GM12878 (cell line): ENCODE measurements at regions of chr1 and their contacts with region 1.

Region 1: DNA sequence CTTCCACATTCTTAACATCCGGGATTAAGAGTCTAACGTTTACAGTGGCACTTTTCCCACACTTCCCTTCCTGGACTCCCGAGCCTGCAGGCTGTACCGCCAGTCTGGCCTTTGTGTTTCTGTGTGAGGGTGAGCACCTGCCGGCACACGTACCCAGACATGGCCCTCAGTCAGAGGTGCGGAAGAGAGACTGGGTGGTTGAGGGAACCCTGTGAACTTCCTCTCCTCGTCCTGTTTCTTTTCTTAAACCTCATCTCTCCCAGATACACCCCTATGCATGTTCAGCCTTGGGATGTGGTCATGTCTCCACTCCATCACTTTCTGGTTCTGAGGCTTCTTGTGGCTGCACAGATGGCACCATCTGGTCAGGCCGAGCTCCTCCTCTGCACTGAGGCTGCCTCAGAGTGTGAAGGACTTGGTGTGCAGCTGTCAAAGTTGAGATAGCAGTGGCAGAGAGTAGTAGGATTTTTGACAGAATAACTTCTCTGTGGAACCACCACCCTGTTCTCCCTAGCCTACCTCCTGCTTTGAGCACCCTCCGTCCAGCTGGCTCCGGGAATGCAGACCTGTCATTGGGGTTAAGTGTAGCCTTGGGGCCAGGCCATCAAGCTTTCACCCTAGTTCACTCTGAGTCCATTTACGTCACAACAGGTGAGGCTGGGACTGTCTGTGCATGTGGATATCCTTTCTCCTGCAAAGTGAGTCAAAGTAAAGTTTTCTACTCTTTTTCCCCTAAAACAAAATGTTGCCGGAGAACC is 31.4 kb downstream of the VASH2 start:
- DNase-seq: peak; percentile 93
- ATAC-seq: peak; percentile 47
- H3K4me3 ChIP-seq: no peak overlapping the region
- H3K27ac ChIP-seq: peak overlapping the region; percentile 93
- H3K4me1 ChIP-seq: peaks cover 56% of the 10 kb centered on the region
- H3K27me3 ChIP-seq: no peaks in the 10 kb centered on the region
- CTCF ChIP-seq: no peak
- EP300 ChIP-seq: no peak; a peak in 1 of 4 replicates
- POLR2A ChIP-seq: peak; percentile 65
- RAD21 ChIP-seq: no peak

Region 2: DNA sequence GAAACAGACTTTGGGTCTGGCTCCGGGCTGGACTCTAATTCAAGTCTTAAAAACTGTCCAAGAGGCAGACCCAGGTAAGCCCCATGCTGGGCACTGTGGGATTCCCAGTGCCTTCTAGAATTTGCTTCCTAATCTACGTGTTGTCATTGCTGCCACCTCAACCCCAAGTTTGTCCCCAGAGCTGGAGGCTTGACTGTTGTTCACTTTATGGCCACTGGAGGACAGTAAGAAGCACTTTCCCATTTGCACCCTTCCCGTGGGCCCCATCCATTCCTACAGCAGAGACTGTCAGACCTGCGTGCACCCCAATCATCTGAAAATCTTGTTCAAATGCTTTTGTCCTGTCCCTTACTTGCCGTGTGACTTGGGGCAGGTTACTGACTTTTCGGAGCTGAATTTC is 60.9 kb before region 1 on chr1:
- CTCF ChIA-PET with region 1: interaction called, 19 read pairs
- POLR2A ChIA-PET with region 1: interaction called, 3 read pairs
- RAD21 ChIA-PET with region 1: interaction called, 5 read pairs
- SMC1A ChIA-PET with region 1: interaction called, 30 read pairs
- in situ Hi-C with region 1: no loop called
- intact Hi-C with region 1: no loop called
- DNase-seq: no peak
- ATAC-seq: peak; percentile 51
- H3K4me3 ChIP-seq: no peak overlapping the region
- H3K27ac ChIP-seq: no peak overlapping the region
- H3K4me1 ChIP-seq: peaks cover 20% of the 10 kb centered on the region
- H3K27me3 ChIP-seq: no peaks in the 10 kb centered on the region
- CTCF ChIP-seq: peak; percentile 45 to 67 (median 57); a peak in 5 of 6 replicates
- EP300 ChIP-seq: no peak
- POLR2A ChIP-seq: no peak
- RAD21 ChIP-seq: peak; percentile 71

Region 3: DNA sequence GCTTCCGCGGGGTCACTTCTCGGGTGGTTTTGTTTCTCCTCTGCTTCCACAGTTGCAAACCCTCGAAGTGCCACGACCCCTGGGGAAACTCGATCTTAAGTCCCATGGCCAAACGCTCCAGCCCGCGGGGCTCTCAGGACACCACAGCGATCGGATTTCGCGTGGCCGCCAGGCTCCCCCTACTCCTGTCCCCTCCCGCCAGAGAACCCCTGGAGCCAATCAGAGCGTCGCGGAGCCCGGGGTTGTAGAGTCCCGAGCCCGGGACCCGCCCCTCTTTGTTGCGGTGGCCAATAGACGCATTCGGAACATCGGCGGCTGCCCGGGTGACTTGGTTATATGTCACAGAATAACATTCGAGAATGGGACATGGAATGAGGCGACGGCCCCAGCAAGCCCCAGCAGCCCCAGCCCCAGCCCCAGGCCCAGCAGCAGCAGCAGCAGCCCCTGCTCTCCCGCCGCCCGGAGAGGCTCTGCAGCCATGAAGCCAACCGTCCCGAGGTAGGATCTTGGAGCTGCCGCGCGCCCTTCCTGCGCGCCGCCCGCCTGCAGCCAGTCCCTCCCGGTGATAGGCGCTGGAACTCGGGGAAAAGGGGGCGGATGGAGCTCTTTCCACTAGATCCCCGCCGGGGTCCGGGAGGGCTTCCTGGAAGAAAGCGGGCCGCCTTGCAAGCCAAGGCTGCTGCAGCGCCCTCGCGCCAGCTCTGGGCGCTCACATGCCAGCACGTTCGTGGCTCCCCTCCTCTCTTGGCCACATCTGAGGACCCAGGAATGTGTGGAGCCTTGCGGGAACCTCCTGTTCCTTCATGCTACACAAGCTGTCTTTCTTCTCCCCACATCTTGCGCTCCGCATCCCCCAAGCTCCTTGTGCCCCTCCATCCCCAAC is 31.3 kb before region 1 on chr1 and contains the start of gene VASH2:
- CTCF ChIA-PET with region 1: interaction called, 17 read pairs
- POLR2A ChIA-PET with region 1: interaction called, 55 read pairs
- RAD21 ChIA-PET with region 1: interaction called, 9 read pairs
- SMC1A ChIA-PET with region 1: interaction called, 75 read pairs
- in situ Hi-C with region 1: no loop called
- intact Hi-C with region 1: loop called (anchors 2 kb)
- DNase-seq: peak; percentile 59
- ATAC-seq: peak; percentile 92
- H3K4me3 ChIP-seq: peak within 1 kb of the TSS; percentile 95
- H3K27ac ChIP-seq: peak within 1 kb of the TSS; percentile 92
- H3K4me1 ChIP-seq: peaks cover 48% of the 10 kb centered on the region
- H3K27me3 ChIP-seq: no peaks in the 10 kb centered on the region
- CTCF ChIP-seq: no peak; a peak in 1 of 6 replicates
- EP300 ChIP-seq: no peak
- POLR2A ChIP-seq: peak; percentile 71
- RAD21 ChIP-seq: no peak
- polyA plus RNA-seq, gene VASH2: 5.4 to 6.5 TPM

Region 4: DNA sequence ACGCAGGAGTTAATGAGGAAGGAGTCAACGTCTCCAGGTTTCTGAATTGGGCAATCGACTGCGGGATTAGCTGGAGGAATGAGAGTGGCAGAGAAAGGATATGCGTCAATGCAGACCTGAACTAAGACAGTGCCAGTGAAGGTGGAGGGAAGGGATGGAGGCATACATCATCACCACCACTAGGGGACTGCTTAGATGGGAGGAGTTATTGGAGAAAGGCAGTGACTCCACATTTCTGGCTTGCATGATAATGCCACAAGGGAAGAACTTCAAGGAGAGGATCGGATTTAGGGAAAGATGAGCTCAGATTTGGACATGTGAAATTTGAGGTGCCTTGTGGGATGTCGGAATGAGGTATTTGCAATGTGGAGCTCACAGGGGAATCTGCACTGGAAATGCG is 13.9 kb before region 1 on chr1:
- CTCF ChIA-PET with region 1: interaction called, 61 read pairs
- POLR2A ChIA-PET with region 1: interaction called, 38 read pairs
- RAD21 ChIA-PET with region 1: interaction called, 73 read pairs
- SMC1A ChIA-PET with region 1: interaction called, 39 read pairs
- in situ Hi-C with region 1: no loop called
- intact Hi-C with region 1: loop called (anchors 1 kb)
- DNase-seq: no peak
- ATAC-seq: peak; percentile 92
- H3K4me3 ChIP-seq: no peak overlapping the region
- H3K27ac ChIP-seq: 0 out of 2 replicates have a peak overlapping the region, but pooled peaks have one; percentile 12
- H3K4me1 ChIP-seq: peaks cover 24% of the 10 kb centered on the region
- H3K27me3 ChIP-seq: no peaks in the 10 kb centered on the region
- CTCF ChIP-seq: peak; percentile 36 to 70 (median 66)
- EP300 ChIP-seq: no peak
- POLR2A ChIP-seq: no peak
- RAD21 ChIP-seq: peak; percentile 36; the same call in 1 of the 2 replicates